GM12878 (cell line): ENCODE measurements at regions of chr3 and their contacts with region 1.

Region 1: GRCh38 chr3:187139126-187139894 is at the start of gene RPL39L:
- DNase-seq: peak; percentile 64
- ATAC-seq: peak; percentile 99
- H3K4me3 ChIP-seq: peak within 1 kb of the TSS; percentile 63
- H3K27ac ChIP-seq: peak within 1 kb of the TSS; percentile 92
- H3K4me1 ChIP-seq: peaks cover 7% of the 10 kb centered on the region; the same call in 1 of the 2 replicates
- H3K27me3 ChIP-seq: no peaks in the 10 kb centered on the region
- CTCF ChIP-seq: peak; percentile 80 to 86 (median 84)
- EP300 ChIP-seq: no peak
- POLR2A ChIP-seq: peak; percentile 96
- RAD21 ChIP-seq: no peak
- polyA plus RNA-seq, gene RPL39L: 12.5 to 33.7 TPM

Region 2: GRCh38 chr3:187066228-187066995 is 72.9 kb before region 1 on chr3:
- CTCF ChIA-PET with region 1: interaction called, 10 read pairs
- POLR2A ChIA-PET with region 1: no interaction called
- RAD21 ChIA-PET with region 1: interaction called, 3 read pairs
- SMC1A ChIA-PET with region 1: interaction called, 4 read pairs
- in situ Hi-C with region 1: no loop called
- intact Hi-C with region 1: no loop called
- DNase-seq: no peak
- ATAC-seq: peak; percentile 67
- H3K4me3 ChIP-seq: no peak overlapping the region
- H3K27ac ChIP-seq: peak overlapping the region; percentile 82
- H3K4me1 ChIP-seq: peaks cover 41% of the 10 kb centered on the region
- H3K27me3 ChIP-seq: no peaks in the 10 kb centered on the region
- CTCF ChIP-seq: peak; percentile 34 to 71 (median 48); a peak in 5 of 6 replicates
- EP300 ChIP-seq: no peak
- POLR2A ChIP-seq: peak; percentile 22; the same call in 1 of the 2 replicates
- RAD21 ChIP-seq: peak; percentile 71

Region 3: DNA sequence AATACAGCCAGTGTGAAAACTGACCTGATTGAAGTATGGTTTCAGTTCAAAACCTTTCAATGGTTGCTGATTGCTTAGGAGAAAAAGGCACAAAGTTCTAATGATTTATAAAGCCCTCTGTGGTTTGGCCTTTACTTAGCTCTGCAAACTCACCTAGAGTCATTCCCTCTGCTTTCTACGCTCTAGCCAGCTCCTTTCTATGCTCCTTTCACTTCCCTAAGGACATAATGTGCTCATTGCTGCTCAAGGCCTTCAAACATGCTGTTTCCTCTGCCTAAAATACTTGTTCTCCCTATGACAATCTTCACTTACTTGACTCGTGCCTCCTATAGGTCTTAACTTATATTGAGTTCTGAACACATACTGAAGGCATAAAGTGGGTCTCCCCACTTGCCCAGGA is 19.0 kb before region 1 on chr3:
- CTCF ChIA-PET with region 1: interaction called, 43 read pairs
- POLR2A ChIA-PET with region 1: interaction called, 5 read pairs
- RAD21 ChIA-PET with region 1: interaction called, 5 read pairs
- SMC1A ChIA-PET with region 1: interaction called, 31 read pairs
- in situ Hi-C with region 1: no loop called
- intact Hi-C with region 1: no loop called
- DNase-seq: no peak
- ATAC-seq: peak; percentile 45
- H3K4me3 ChIP-seq: no peak overlapping the region
- H3K27ac ChIP-seq: no peak overlapping the region
- H3K4me1 ChIP-seq: peaks cover 6% of the 10 kb centered on the region; the same call in 1 of the 2 replicates
- H3K27me3 ChIP-seq: no peaks in the 10 kb centered on the region
- CTCF ChIP-seq: no peak
- EP300 ChIP-seq: no peak
- POLR2A ChIP-seq: no peak
- RAD21 ChIP-seq: no peak

Region 4: DNA sequence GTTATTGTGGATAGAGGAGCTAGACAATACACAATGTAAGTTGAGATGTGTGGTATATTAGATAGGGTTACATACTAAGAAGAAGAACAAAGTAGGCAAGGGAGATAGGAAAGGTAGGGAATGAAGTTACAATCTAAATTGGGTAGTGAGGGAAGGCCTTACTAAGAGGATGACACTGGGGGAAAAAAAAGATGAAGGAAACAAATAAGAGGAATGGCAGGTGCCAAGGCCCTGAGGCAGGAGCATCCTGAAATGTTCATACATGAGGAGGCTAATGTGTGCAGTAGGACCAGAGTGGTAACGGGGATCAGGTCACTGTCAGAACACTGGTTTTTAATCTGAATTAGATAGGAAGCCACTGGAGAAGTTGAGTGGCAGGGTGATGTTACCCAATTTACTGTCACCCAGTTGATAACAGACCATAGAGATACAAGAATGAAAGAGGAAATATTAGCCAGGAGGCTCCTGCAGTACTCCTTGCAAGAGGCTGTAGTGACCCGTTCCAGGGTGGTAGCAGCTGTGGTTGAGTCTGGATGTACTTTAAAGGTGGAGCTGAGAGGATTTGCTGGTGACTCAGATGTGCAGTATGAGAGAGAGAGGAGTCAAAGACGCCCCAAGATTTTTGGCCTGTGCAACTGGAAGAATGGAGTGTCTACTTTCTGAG is 72.4 kb after region 1 on chr3:
- CTCF ChIA-PET with region 1: no interaction called
- POLR2A ChIA-PET with region 1: no interaction called
- RAD21 ChIA-PET with region 1: no interaction called
- SMC1A ChIA-PET with region 1: no interaction called
- in situ Hi-C with region 1: no loop called
- intact Hi-C with region 1: no loop called
- DNase-seq: no peak
- ATAC-seq: no peak
- H3K4me3 ChIP-seq: no peak overlapping the region
- H3K27ac ChIP-seq: no peak overlapping the region
- H3K4me1 ChIP-seq: no peaks in the 10 kb centered on the region
- H3K27me3 ChIP-seq: 0 out of 4 replicates have a peak, but pooled peaks cover 0 to 3% of the 10 kb centered on the region in 2 experiments
- CTCF ChIP-seq: no peak
- EP300 ChIP-seq: no peak
- POLR2A ChIP-seq: no peak
- RAD21 ChIP-seq: no peak

Region 5: DNA sequence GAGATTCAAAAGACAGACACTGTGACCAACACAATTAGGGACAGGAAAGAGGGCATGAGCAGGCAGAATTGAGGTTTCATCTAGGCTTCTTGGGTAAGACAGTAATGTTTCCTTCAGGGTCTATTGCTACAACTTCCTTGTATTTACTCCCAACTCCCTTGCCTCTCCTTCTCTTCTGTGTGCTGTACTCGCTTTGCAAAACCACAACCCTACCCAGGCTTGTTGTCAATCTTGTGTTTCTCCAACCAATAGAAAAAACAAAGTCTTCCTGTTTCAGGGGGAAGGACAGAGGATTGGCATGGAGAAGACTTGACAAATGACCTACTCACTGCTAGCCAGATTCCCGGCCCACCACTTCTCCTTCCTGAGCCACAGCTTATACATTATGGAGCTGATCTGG is 188.5 kb after region 1 on chr3:
- CTCF ChIA-PET with region 1: no interaction called
- POLR2A ChIA-PET with region 1: no interaction called
- RAD21 ChIA-PET with region 1: no interaction called
- SMC1A ChIA-PET with region 1: no interaction called
- in situ Hi-C with region 1: no loop called
- intact Hi-C with region 1: no loop called
- DNase-seq: no peak
- ATAC-seq: no peak
- H3K4me3 ChIP-seq: no peak overlapping the region
- H3K27ac ChIP-seq: no peak overlapping the region
- H3K4me1 ChIP-seq: no peaks in the 10 kb centered on the region
- H3K27me3 ChIP-seq: peaks cover 0 to 1% of the 10 kb centered on the region in 2 experiments; a peak in 1 of 4 replicates
- CTCF ChIP-seq: no peak
- EP300 ChIP-seq: no peak
- POLR2A ChIP-seq: no peak
- RAD21 ChIP-seq: no peak